ENCODE measurements at regions of chr2 and their contacts with region 1.

Region 1: DNA sequence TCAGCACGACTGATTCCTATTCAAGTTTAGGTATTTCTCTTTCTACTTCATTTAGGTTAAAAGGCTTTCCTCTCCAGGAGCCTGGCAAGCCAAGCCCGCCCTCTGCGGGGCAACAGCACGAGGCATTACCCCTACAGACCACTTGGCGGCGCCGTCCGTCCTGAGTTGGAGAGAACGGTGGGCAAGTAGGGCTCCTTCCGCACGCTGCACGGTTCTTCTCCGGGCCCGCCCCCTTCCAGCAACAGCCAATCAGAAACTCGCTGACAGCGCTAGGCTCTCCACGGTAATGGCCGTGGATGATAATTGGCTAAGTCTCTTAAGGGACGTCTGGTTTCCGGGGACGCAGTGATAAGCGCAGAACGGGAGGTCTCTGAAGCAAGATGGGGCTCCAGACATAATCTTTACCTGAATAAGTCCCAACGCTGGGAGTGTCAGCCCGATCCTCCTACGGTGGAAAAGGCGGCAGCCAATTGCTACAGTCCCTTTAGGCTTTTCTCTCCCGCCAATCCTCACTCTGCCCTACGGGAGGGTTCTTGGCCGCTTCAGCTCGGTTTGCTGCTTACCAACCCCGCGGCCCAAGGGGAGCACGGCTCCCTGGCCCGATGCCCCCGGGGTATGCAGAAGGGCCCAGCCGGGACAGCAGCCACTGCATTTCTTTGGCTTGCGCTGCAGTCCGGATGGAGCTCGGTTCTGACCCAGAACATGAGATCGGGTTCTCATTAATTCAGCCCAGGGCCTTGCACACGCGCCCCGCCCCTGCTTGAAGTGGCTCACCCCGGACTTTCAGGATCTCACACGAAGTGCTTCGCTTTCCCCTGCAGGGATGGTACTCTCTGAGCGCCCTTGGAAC is 206.9 kb upstream of the PKDCC start:
- DNase-seq: peak; percentile 98
- H3K4me3 ChIP-seq: peak overlapping the region; percentile 47 to 83 (median 70)
- H3K27ac ChIP-seq: peak overlapping the region; percentile 80 to 92 (median 88)
- H3K4me1 ChIP-seq: peaks cover 0 to 11% (median 8%) of the 10 kb centered on the region in 4 donors
- H3K27me3 ChIP-seq: no peaks in the 10 kb centered on the region
- CTCF ChIP-seq: peak; percentile 91 to 98 (median 97)
- EP300 ChIP-seq: no peak
- POLR2A ChIP-seq: peak; percentile 43 to 55

Region 2: DNA sequence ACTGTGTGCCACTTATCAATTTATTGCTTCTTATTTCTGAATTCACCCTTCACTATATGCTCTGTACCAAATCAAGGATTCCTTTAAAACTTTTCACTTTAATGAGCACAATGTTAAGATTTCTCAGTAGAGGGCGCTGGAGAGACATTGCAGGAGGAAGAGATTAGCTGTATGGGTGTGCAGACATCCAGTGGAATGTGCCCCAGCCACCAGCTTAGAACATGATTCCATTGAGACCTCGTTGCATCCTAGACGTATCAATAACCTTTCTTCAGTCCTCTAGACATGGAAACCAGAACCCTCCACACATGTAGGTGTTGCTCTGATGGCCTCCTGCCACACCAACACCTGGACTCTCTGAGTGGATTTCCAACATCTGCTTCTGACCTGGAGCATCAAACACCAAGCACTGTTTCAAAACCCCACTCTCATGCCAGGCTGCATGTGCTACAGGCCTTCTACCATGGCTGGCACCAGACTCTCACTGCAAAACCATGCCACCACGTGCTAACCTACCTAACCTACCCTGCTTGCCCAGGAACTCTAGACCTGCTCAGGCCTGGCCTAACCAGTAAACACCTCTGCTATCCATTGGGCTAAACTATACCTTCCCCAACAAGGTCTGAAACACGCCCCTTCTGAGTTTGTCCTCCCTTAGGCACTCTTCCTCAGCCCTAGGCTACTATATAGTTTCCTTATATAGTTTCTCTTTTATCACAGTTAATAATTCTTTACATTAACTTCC is 426.3 kb before region 1 on chr2:
- intact Hi-C with region 1: no loop called
- DNase-seq: no peak
- H3K4me3 ChIP-seq: no peak overlapping the region
- H3K27ac ChIP-seq: no peak overlapping the region
- H3K4me1 ChIP-seq: peaks cover 0 to under 1% (median under 1%) of the 10 kb centered on the region in 4 donors
- H3K27me3 ChIP-seq: no peaks in the 10 kb centered on the region
- CTCF ChIP-seq: peak in 1 of 4 experiments; percentile 30
- EP300 ChIP-seq: no peak
- POLR2A ChIP-seq: no peak

Region 3: DNA sequence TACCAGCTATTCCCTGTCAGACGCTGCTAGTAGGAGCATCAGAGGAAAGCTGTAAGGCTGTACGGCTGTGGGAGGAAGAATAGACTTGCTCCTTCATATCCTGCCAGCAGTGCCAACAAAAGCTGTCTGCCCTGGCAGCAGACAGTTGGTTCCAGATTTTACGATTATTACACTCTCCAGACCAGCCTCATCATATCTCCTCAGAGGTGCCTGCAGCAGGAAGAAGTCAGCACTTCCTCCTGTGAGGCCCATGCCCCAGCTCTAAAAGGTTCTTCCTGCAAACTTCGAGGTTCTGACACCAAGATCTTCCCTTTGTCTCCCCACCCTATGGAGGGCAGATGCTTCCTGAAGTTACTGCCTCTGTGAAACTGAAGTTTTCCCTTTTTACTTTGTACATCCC is 330.8 kb before region 1 on chr2:
- intact Hi-C with region 1: no loop called
- DNase-seq: no peak
- H3K4me3 ChIP-seq: no peak overlapping the region
- H3K27ac ChIP-seq: no peak overlapping the region
- H3K4me1 ChIP-seq: peaks cover 0 to 4% (median 0%) of the 10 kb centered on the region in 4 donors
- H3K27me3 ChIP-seq: no peaks in the 10 kb centered on the region
- CTCF ChIP-seq: no peak
- EP300 ChIP-seq: no peak
- POLR2A ChIP-seq: no peak

Region 4: GRCh38 chr2:42360890-42361727 is 520.2 kb after region 1 on chr2 and contains the start of gene COX7A2L:
- intact Hi-C with region 1: loop called (anchors 10 kb)
- DNase-seq: peak; percentile 98
- H3K4me3 ChIP-seq: peak within 1 kb of the TSS; percentile 75 to 97 (median 94)
- H3K27ac ChIP-seq: peak within 1 kb of the TSS; percentile 88 to 94 (median 92)
- H3K4me1 ChIP-seq: peaks cover 0 to 32% (median 17%) of the 10 kb centered on the region in 4 donors
- H3K27me3 ChIP-seq: no peaks in the 10 kb centered on the region
- CTCF ChIP-seq: peak in 1 of 4 experiments; percentile 9
- EP300 ChIP-seq: peak in 1 of 4 donors; percentile 37
- POLR2A ChIP-seq: peak; percentile 73 to 76
- total RNA-seq, gene COX7A2L: 149 to 209 (median 172) TPM

Region 5: DNA sequence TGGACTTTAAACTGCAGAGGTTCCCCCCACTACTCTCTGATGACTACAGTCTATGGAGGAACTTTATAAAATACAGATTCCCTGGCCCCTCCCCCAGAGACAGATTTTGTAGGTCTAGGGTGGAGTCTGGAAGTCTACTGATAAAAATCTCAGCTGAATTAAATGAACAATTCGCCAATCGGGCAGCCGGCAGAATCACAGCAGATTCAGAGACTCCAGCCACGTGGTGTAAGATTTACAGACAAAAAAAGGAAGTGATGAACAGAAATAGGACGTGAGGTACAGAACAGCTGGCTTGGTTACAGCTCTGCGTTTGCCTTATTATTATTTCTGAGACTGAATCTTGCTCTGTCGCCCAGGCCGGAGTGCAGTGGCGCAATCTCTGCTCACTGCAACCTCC is 706.1 kb after region 1 on chr2:
- intact Hi-C with region 1: no loop called
- DNase-seq: no peak
- H3K4me3 ChIP-seq: no peak overlapping the region
- H3K27ac ChIP-seq: no peak overlapping the region
- H3K4me1 ChIP-seq: no peaks in the 10 kb centered on the region
- H3K27me3 ChIP-seq: no peaks in the 10 kb centered on the region
- CTCF ChIP-seq: no peak
- EP300 ChIP-seq: no peak
- POLR2A ChIP-seq: no peak